ENCODE measurements at regions of chr22 and their contacts with region 1.

Region 1: GRCh38 chr22:42188808-42189447 is 58.3 kb upstream of the CYP2D6 start:
- DNase-seq: no peak
- H3K4me3 ChIP-seq: no peak overlapping the region
- CTCF ChIP-seq: no peak

Region 2: GRCh38 chr22:42222140-42222539 is 33.2 kb after region 1 on chr22:
- in situ Hi-C with region 1: loop called (anchors 5 kb)
- DNase-seq: no peak
- H3K4me3 ChIP-seq: no peak overlapping the region
- CTCF ChIP-seq: no peak

Region 3: DNA sequence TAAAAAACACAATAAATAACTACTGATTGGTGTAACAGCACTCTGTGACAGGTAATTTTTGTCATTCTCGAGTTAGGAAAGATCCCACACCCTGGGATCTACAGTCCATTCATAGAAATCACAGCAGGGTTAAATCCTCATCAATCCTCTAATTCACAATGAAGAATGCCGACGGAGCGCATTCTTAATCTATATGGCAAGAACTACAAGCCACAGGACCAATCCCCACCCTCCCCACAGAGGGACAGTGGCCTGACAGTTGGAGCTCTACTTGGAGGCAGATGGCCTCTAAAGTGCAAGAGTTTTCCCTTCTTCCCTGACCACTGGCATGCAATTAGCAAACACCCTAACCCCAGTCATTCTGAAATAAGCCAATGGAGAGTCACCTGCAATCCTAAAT is 47.3 kb after region 1 on chr22:
- in situ Hi-C with region 1: no loop called
- DNase-seq: no peak
- H3K4me3 ChIP-seq: no peak overlapping the region
- CTCF ChIP-seq: no peak

Region 4: DNA sequence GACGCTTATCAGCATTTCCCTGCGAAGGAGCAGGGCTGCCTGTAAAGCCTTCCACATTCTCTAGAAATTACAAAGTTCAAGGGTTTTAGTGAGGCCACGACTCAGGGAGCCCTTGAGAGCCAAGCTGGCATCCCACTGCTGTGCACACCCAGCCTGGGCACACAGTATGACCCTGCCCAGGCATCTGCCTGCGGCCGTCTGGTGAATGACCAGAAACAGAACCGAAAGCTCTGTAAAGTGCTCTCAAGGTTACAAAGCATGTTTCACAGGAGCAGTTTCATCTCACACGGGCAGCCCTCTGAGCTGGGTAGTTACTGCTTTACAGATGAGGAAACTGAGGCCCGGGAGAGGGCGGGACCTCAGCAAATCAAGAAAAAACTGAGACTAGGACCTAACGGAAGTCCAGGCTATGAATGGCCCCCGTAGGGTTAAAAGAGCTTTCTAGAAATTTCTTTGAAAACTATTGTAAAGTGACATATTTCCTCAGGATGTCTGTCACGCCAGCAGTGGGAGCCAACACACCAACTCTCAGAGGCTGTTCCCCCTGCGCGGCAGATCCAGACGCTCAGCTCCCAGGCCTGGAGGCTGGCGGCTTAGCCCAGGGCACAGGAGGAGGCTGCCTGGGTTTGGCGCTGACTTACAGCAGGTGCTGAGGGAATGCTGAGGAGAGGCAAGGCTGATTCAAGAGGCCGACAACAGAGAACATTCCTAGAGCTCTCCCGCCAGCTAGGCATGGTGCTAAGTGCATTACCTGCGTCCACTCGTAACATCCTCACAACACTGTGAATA is 89.3 kb after region 1 on chr22:
- in situ Hi-C with region 1: loop called (anchors 5 kb)
- DNase-seq: no peak
- H3K4me3 ChIP-seq: no peak overlapping the region
- CTCF ChIP-seq: peak; percentile 33

Region 5: GRCh38 chr22:42444077-42444904 is 255.4 kb after region 1 on chr22:
- in situ Hi-C with region 1: loop called (anchors 5 kb)
- DNase-seq: peak; percentile 73
- H3K4me3 ChIP-seq: peak overlapping the region; percentile 31
- CTCF ChIP-seq: peak; percentile 76

Measured in astrocyte of the cerebellum (primary cell).